ENCODE measurements at regions of chr20 and their contacts with region 1.

Region 1: GRCh38 chr20:48635433-48636310 is 192.1 kb downstream of the PREX1 start:
- DNase-seq: peak; percentile 40 to 66
- ATAC-seq: peak; percentile 36 to 78 (median 60)
- H3K4me3 ChIP-seq: no peak overlapping the region
- H3K27ac ChIP-seq: no peak overlapping the region
- H3K4me1 ChIP-seq: no peaks in the 10 kb centered on the region
- H3K27me3 ChIP-seq: no peaks in the 10 kb centered on the region
- CTCF ChIP-seq: peak; percentile 62 to 87 (median 80)

Region 2: GRCh38 chr20:48904365-48905296 is 269.0 kb after region 1 on chr20:
- intact Hi-C with region 1: loop called in 4 of 10 experiments (anchors 5 kb)
- DNase-seq: peak; percentile 21 to 56
- ATAC-seq: peak in 7 of 8 donors; percentile 40 to 75 (median 59)
- H3K4me3 ChIP-seq: no peak overlapping the region
- H3K27ac ChIP-seq: no peak overlapping the region
- H3K4me1 ChIP-seq: peaks cover 0 to 12% (median 5%) of the 10 kb centered on the region in 9 donors
- H3K27me3 ChIP-seq: peaks cover 0 to 3% (median 0%) of the 10 kb centered on the region in 7 donors
- CTCF ChIP-seq: peak; percentile 80 to 89 (median 85)

Region 3: DNA sequence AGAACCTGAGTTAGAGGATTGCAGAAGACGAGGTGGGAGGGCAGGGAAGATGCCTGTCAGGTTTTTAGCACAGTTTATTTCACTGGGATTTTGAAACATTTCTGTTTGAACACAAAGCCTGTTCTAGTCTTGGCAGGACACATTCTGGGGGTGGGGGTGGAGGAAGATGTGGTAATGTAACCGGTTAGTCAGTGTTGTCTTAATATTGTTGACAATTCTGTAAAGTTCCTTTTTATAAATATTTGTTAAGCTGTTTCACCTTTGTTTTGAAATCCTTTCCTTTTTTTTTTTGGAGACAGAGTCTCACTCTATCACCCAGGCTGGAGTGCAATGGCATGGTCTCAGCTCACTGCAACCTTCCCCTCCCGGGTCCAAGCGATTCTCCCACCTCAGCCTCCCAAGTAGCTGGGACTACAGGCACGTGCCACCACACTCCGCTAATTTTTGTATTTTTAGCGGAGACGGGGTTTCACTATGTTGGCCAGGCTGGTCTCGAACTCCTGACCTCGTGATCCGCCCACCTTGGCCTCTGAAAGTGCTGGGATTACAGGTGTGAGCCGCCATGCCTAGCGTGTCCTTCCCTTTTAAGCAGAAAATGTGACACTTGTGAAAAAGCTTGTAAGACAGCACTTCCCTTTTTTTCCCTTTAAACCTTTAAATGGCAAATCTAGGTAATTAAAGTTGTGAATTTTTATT is 1197.1 kb after region 1 on chr20:
- intact Hi-C with region 1: loop called in 1 of 10 experiments (anchors 5 kb)
- DNase-seq: no peak
- ATAC-seq: peak in 2 of 8 donors; percentile 27 to 62
- H3K4me3 ChIP-seq: no peak overlapping the region
- H3K27ac ChIP-seq: peak overlapping the region in 3 of 10 donors; percentile 3 to 68 (median 29)
- H3K4me1 ChIP-seq: peaks cover 0 to 19% (median 0%) of the 10 kb centered on the region in 9 donors
- H3K27me3 ChIP-seq: no peaks in the 10 kb centered on the region
- CTCF ChIP-seq: no peak